HEK293 (cell line): ENCODE measurements at regions of chr6 and their contacts with region 1.

Region 1: DNA sequence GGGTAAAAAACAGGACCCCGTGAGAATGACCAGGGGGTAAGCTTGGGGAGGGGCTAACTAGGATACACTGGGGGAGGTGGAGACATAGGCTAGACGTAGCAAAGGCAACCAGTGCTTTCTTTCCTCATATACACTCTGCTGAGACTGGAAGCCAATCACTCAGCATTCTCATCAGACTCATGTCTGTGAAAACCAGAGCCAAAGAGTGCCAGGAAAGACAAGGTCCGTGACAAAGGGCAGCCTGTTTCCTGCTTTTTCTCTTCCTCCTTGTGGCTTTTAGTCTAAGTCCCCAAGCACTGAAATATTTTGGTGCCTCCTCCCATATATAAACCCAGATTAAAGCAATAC is 97.9 kb upstream of the NEDD9 start:
- H3K4me3 ChIP-seq: no peak overlapping the region
- H3K27ac ChIP-seq: no peak overlapping the region
- H3K4me1 ChIP-seq: no peaks in the 10 kb centered on the region
- CTCF ChIP-seq: no peak

Region 2: GRCh38 chr6:11025921-11026635 is 304.3 kb before region 1 on chr6:
- CTCF ChIA-PET with region 1: interaction called, 10 read pairs
- POLR2A ChIA-PET with region 1: no interaction called
- H3K4me3 ChIP-seq: no peak overlapping the region
- H3K27ac ChIP-seq: no peak overlapping the region
- H3K4me1 ChIP-seq: peaks cover 28% of the 10 kb centered on the region
- CTCF ChIP-seq: no peak